Activated naive CD4-positive, alpha-beta T cell treated with anti-CD3 and anti-CD28 coated beads for 36 hours (primary cell): ENCODE measurements at regions of chr21 and their contacts with region 1.

Region 1: DNA sequence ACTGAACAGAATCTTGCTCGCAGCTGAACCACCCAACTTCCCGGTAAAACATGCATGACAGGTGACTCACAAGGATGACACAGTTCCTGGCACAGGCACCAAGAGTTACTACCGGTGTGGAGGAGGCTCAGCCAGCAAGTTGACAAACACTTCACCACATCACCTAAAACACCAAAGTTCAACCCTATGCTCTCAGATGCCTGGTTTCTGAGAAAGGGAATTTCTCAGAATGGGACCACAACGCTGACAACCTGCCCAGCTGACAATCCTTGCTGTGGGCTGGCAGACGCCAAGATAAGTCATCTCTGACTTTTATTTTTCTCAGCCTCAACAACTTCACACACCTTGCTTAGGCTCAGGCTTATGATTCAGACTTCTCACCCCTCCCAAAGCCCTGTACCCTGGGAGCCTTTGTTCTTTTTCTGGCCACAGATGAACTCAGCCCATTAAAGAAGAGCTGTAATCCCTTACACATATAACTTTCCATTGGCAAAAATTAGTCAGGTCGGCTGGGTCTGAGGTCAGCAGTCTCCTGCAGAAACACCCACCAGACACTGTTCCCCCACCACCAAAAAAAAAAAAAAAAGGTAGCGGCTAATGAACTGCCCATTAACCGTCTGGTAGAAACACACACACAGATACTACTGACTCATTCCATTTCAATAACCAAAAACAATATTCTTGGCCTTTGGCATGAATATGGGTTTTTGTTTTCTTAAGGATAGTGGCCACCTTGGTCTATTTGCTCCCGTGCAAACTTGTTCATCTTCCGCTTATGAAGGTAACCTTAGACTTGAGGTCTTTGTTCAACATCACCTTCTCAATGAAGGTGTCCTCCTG is 10.8 kb upstream of the TIAM1 start:
- DNase-seq: peak; percentile 94
- H3K4me3 Mint-ChIP-seq: peak overlapping the region; percentile 2
- H3K27ac Mint-ChIP-seq: peak overlapping the region; percentile 88
- H3K4me1 Mint-ChIP-seq: peaks cover 47% of the 10 kb centered on the region
- H3K27me3 Mint-ChIP-seq: no peaks in the 10 kb centered on the region

Region 2: GRCh38 chr21:31198575-31198974 is 156.2 kb before region 1 on chr21:
- CTCF ChIA-PET with region 1: interaction called, 3 read pairs
- intact Hi-C with region 1: loop called (anchors 1 kb)
- DNase-seq: no peak
- H3K4me3 Mint-ChIP-seq: no peak overlapping the region
- H3K27ac Mint-ChIP-seq: no peak overlapping the region
- H3K4me1 Mint-ChIP-seq: peaks cover 51% of the 10 kb centered on the region
- H3K27me3 Mint-ChIP-seq: no peaks in the 10 kb centered on the region

Region 3: DNA sequence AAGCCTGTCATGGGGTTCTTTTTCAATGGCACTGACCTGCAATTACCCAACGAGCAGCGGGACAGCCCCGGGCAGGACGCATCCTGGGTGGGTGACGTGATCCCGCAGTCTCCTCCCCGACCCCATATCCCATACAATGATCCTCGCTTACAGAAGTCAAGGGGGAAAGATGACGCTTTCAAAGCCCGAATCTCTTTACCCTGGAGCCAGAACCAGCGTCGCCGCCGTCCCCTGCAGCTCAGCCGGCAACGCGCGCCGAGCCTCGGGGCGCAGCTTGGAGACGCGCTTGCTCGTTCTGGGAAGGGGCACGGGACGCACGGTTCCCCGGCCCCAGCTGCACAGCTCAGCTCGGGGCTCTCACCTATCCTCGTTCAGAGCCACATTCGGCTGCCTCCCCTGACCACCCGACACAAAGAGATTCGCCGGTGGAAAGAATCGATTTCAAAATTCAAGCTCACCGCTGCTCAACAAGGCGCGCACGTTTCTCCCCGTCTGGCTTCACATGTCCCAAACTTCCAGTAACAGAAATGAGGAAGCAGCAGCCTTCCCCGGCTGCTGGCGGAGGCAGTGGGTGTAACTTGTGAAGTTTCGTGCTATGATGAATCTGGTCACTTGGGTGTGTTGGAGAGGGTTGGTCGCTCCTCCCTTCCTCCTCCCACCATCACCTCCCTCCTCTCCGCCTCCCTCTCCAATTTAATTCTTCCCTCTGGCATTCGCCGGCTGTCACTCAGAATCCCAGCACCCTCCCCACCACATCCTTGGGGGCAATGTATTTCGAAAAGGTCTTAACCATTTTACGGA is 10.9 kb before region 1 on chr21 and contains the start of gene TIAM1:
- CTCF ChIA-PET with region 1: interaction called, 23 read pairs
- intact Hi-C with region 1: loop called (anchors 1 kb)
- DNase-seq: peak; percentile 58
- H3K4me3 Mint-ChIP-seq: peak within 1 kb of the TSS; percentile 91
- H3K27ac Mint-ChIP-seq: peak within 1 kb of the TSS; percentile 88
- H3K4me1 Mint-ChIP-seq: peaks cover 58% of the 10 kb centered on the region
- H3K27me3 Mint-ChIP-seq: no peaks in the 10 kb centered on the region
- total RNA-seq, gene TIAM1: 50.1 to 51.0 TPM

Region 4: DNA sequence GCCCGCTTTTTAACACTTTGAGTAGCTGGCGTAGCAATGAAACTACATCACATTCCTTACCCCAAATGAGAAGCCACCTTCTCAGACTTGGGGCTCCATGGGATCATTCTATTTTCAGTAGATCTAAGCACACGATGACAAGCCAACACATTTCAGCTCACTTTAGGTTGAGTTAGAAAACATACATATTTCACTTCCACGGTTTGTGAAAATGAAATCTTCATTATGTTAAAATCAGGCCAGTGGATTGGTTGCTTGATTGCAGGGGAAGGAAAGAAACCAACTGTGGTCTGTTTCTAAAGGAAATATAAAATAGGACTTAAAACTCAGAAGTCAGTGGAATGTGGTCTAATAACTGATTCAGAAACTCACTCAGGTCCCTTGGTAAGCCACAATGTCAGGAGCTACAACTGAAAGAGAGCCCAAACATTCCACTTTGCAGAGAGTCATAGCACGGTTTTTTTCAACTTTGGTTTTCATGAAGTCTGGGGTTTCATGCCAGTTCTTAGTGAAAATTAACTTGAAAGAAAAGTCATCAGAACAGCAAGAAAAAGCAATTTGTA is 71.5 kb after region 1 on chr21:
- CTCF ChIA-PET with region 1: interaction called, 3 read pairs
- intact Hi-C with region 1: loop called (anchors 1 kb)
- DNase-seq: peak; percentile 23
- H3K4me3 Mint-ChIP-seq: no peak overlapping the region
- H3K27ac Mint-ChIP-seq: peak overlapping the region; percentile 46
- H3K4me1 Mint-ChIP-seq: peaks cover 21% of the 10 kb centered on the region
- H3K27me3 Mint-ChIP-seq: no peaks in the 10 kb centered on the region

Region 5: GRCh38 chr21:31659536-31660258 is 304.9 kb after region 1 on chr21 and contains the start of gene SOD1:
- CTCF ChIA-PET with region 1: no interaction called
- intact Hi-C with region 1: loop called (anchors 1 kb)
- DNase-seq: peak; percentile 95
- H3K4me3 Mint-ChIP-seq: peak within 1 kb of the TSS; percentile 100
- H3K27ac Mint-ChIP-seq: peak within 1 kb of the TSS; percentile 99
- H3K4me1 Mint-ChIP-seq: peaks cover 68% of the 10 kb centered on the region
- H3K27me3 Mint-ChIP-seq: no peaks in the 10 kb centered on the region
- total RNA-seq, gene SOD1: 281 to 297 TPM